Left cardiac atrium (tissue), 4 donors: ENCODE measurements at regions of chr18 and their contacts with region 1.

Region 1: DNA sequence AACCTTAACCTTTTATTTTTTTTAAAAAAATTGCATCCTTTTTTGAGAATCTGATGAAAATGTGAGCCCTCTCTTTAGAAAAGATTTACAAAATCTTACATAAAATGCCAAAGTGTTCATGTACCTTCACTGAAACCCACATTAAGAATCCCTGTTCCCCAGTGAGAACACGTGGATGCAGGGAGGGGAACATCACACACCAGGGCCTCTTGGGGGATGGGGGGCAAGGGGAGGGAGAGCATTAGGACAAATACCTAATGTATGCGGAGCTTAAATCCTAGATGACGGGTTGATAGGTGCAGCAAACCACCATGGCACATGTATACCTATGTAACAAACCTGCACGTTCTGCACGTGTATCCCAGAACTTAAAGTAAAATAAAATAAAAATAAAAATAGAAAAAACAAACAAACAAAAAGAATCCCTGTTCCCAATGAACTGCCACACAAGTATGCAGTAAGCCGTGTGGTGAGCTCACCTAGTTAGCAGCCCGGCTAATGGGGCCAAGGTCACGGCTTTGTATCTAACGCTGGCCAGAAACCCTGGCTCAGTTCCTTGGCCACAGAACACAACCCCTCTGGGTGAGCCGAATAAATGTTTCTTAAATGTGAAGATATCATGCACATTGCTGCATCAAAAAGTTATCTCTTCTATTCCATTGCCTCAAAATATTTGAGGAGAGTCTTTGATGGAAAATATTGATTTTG is 41.4 kb downstream of the CHST9 start:
- DNase-seq: peak; percentile 41
- ATAC-seq: peak; percentile 65 to 88

Region 2: DNA sequence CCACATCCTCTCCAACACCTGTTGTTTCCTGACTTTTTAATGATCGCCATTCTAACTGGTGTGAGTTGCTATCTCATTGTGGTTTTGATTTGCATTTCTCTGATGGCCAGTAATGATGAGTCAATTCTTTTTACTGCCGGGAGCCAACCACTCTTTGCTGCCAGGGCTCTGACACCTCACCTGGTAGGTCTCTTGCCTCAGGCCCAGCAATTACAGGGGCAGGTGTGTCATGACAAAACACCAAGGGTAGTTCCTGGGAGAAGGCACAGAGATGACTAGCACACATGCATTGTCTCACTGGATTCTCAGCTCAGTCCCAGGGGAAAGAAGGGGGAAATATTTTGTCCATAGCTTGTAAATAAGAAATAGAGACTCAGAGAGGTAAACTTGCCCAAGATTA is 80.9 kb before region 1 on chr18:
- intact Hi-C with region 1: loop called in 1 of 2 experiments (anchors 10 kb)
- DNase-seq: no peak
- ATAC-seq: no peak